Natural killer cell (primary cell): ENCODE measurements at regions of chr11 and their contacts with region 1.

Region 1: GRCh38 chr11:118536726-118537125 is 5.7 kb downstream of the TMEM25 start:
- DNase-seq: no peak
- ATAC-seq: no peak
- H3K4me3 ChIP-seq: no peak overlapping the region
- H3K4me3 Mint-ChIP-seq: no peak overlapping the region
- H3K27ac ChIP-seq: no peak overlapping the region
- H3K27ac Mint-ChIP-seq: no peak overlapping the region
- H3K4me1 ChIP-seq: peaks cover 4% of the 10 kb centered on the region
- H3K4me1 Mint-ChIP-seq: peaks cover 3 to 4% of the 10 kb centered on the region in 2 donors
- H3K27me3 ChIP-seq: no peaks in the 10 kb centered on the region
- H3K27me3 Mint-ChIP-seq: no peaks in the 10 kb centered on the region
- CTCF ChIP-seq: no peak

Region 2: DNA sequence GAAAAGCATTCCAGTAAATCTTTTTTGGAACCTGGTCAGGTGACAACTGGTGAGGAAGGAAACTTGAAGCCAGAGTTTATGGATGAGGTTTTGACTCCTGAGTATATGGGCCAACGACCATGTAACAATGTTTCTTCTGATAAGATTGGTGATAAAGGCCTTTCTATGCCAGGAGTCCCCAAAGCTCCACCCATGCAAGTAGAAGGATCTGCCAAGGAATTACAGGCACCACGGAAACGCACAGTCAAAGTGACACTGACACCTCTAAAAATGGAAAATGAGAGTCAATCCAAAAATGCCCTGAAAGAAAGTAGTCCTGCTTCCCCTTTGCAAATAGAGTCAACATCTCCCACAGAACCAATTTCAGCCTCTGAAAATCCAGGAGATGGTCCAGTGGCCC is 33.5 kb before region 1 on chr11:
- intact Hi-C with region 1: loop called (anchors 1 kb)
- DNase-seq: no peak
- ATAC-seq: no peak
- H3K4me3 ChIP-seq: no peak overlapping the region
- H3K4me3 Mint-ChIP-seq: no peak overlapping the region
- H3K27ac ChIP-seq: no peak overlapping the region
- H3K27ac Mint-ChIP-seq: peak overlapping the region; percentile 1 to 18
- H3K4me1 ChIP-seq: no peaks in the 10 kb centered on the region
- H3K4me1 Mint-ChIP-seq: peaks cover 0 to 10% of the 10 kb centered on the region in 2 donors
- H3K27me3 ChIP-seq: no peaks in the 10 kb centered on the region
- H3K27me3 Mint-ChIP-seq: no peaks in the 10 kb centered on the region
- CTCF ChIP-seq: no peak

Region 3: GRCh38 chr11:118997627-118998387 is 461.1 kb after region 1 on chr11 and contains the start of gene CENATAC:
- intact Hi-C with region 1: no loop called
- DNase-seq: peak; percentile 91 to 97
- ATAC-seq: peak; percentile 92 to 98 (median 95)
- H3K4me3 ChIP-seq: peak within 1 kb of the TSS; percentile 88
- H3K4me3 Mint-ChIP-seq: peak within 1 kb of the TSS; percentile 97
- H3K27ac ChIP-seq: peak within 1 kb of the TSS; percentile 93
- H3K27ac Mint-ChIP-seq: peak within 1 kb of the TSS; percentile 94
- H3K4me1 ChIP-seq: peaks cover 23% of the 10 kb centered on the region
- H3K4me1 Mint-ChIP-seq: peaks cover 30 to 33% of the 10 kb centered on the region in 2 donors
- H3K27me3 ChIP-seq: no peaks in the 10 kb centered on the region
- H3K27me3 Mint-ChIP-seq: no peaks in the 10 kb centered on the region
- CTCF ChIP-seq: no peak
- total RNA-seq, gene CENATAC: 121 to 143 (median 122) TPM